HEK293 (cell line): ENCODE measurements at regions of chr5 and their contacts with region 1.

Region 1: GRCh38 chr5:151740336-151740942 is 18.0 kb downstream of the ATOX1 start:
- H3K4me3 ChIP-seq: no peak overlapping the region
- H3K27ac ChIP-seq: no peak overlapping the region
- H3K4me1 ChIP-seq: peaks cover 2% of the 10 kb centered on the region; the same call in 1 of the 2 replicates
- CTCF ChIP-seq: peak; percentile 57; the same call in 1 of the 2 replicates

Region 2: DNA sequence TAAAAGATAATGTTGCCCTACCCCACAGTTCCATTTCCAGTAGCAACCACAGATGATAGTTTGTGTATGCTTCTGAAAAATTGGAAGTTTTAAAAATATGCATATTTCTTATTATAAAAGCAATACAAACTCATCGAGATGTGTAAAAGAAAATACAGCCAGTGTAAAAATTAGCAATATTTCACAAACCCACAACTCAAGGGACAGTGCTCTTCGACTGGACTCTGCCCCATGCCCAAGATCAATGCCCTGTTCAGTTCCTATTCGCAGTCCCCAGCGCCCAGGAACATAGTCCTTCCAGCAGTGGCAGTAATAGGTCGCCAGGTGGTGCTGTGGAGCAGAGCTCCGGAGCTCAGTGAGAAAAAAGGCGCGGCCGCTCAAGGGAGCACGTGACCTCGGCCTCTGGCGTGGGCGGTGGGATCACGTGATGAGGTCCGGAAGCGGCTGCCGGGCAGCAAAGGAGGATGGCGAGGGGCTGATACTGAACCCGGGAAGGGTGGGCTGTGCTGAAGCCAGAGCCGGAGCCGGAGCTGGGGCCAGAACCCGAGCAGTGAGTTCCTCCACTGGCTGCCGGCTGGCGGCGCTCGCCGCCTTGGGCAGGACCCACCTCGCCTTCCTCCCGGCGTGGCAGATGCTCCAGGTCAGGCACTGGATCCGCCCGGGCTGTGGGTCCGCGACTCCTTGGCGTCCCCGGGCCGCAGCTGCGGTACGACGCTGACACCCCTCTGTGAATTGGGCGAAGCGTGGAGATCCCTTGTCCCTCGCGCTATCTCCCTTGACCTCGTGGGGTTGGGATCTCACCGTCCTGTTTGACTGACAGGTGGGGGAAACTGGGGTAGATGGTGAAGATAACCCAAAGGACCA is 293.0 kb before region 1 on chr5 and contains the start of gene SLC36A1:
- CTCF ChIA-PET with region 1: interaction called, 12 read pairs
- POLR2A ChIA-PET with region 1: no interaction called
- H3K4me3 ChIP-seq: peak within 1 kb of the TSS; percentile 63
- H3K27ac ChIP-seq: no peak within 1 kb of the TSS
- H3K4me1 ChIP-seq: peaks cover 5% of the 10 kb centered on the region
- CTCF ChIP-seq: peak; percentile 91

Region 3: DNA sequence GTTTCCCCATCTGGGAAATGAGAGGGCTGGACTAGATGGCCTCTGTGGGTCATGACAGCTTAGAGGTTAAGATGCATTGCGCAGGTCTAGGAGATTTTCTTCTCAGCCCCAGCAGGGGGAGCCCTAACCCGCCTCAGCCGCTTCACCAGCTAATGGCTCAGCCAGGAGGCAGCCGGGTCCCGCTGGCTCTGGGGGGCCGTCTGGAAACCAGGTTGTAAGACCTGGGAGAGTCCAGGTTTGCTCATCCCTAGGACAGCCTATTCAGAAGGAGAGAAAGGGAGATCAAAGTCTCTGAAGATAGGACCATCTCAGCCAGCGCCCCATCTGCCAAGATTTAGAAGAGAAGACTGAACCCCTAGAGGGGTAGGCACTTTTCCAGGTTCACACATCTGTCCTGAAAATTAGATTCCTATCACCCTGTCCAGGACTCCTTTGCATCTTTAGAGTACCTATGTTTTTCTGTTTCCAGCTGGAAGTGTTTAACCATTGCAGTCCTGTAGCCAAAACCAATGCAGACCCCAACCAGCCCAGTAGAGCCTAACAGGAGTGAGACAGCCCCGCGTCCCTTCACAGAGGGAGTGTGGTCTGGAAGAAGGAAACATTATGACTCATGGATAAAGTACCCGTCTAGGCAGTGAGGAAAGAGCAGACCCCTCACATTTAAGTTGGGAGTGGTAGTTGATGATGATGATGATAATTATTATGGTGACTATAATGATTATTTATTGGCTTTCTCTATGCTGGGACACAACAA is 81.3 kb before region 1 on chr5:
- CTCF ChIA-PET with region 1: interaction called, 180 read pairs
- POLR2A ChIA-PET with region 1: interaction called, 3 read pairs
- H3K4me3 ChIP-seq: no peak overlapping the region
- H3K27ac ChIP-seq: no peak overlapping the region
- H3K4me1 ChIP-seq: no peaks in the 10 kb centered on the region
- CTCF ChIP-seq: peak; percentile 76

Region 4: DNA sequence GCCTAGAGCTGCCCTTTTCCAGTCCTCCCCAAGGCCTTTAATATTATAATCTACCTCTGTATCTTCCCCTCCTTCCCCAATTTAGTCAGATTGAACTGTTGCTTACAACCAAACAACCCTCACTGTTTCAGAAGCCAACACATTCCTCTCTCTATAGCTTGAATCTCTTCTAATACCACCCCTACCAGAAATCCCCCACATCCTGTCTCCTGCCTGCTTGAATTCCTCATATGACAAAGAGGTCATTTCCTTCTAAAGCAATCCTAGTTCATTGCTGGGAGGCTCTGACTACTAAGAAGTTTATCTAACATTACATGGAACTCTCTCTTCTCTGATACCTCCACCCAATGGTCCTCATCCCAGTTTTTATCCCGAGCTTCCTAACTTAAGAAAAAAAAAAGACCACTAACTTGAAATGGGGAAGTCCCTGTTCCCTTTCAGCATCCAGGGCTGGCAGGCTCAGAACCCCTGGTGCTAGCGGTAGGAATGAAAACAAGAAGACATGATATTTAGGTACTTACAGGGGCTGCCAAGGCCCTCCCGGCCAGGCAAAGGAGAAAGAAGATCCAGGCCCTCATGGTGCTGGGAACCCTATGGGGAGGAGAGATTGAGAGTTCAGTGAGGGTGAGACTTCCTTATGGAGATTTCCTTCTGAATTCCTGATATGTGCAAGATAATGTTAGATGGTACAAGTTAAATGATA is 64.7 kb before region 1 on chr5:
- CTCF ChIA-PET with region 1: interaction called, 11 read pairs
- POLR2A ChIA-PET with region 1: no interaction called
- H3K4me3 ChIP-seq: no peak overlapping the region
- H3K27ac ChIP-seq: no peak overlapping the region
- H3K4me1 ChIP-seq: peaks cover 2% of the 10 kb centered on the region; the same call in 1 of the 2 replicates
- CTCF ChIP-seq: no peak

Region 5: DNA sequence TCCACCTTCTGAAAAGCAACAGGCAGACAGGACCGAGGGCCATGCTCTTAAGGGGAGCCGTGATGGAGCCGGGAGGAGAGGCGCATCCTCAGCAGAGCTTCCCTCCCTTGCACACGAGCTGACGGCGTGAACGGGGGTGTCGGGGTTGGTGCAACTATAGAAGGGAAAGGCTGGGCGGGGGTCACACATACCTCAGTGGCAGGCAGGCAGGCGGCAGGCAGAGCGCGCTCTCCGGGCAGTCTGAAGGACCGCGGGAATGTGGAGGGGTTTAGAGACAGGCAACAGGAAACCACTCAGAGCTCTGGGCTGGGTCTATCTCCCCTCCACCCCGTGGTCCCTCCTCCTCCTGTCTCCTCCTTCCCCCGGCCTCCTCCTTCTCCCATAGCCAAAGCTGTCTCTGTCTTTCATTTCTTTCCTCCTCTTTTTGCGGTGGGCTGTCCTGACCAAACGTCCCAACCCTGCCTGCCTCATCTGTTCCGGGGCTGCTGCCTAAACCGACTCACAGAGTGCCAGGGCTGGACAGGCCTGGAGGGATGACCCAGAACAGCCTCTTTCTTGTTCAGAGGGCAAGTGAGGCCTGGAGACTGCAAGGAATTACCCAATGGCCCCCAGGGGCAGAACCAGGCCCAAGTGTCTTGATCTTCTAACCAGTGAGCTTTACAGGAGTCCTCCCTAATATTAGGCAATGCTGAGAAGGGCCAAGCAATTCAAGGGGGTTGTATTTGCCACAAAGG is 53.6 kb before region 1 on chr5 and contains the start of gene SPARC:
- CTCF ChIA-PET with region 1: interaction called, 10 read pairs
- POLR2A ChIA-PET with region 1: interaction called, 8 read pairs
- H3K4me3 ChIP-seq: peak within 1 kb of the TSS; percentile 67
- H3K27ac ChIP-seq: no peak within 1 kb of the TSS; the same call in 1 of the 2 replicates
- H3K4me1 ChIP-seq: peaks cover 6% of the 10 kb centered on the region; the same call in 1 of the 2 replicates
- CTCF ChIP-seq: no peak

Region 6: GRCh38 chr5:151719228-151720000 is 21.0 kb before region 1 on chr5:
- CTCF ChIA-PET with region 1: interaction called, 73 read pairs
- POLR2A ChIA-PET with region 1: interaction called, 3 read pairs
- H3K4me3 ChIP-seq: no peak overlapping the region
- H3K27ac ChIP-seq: no peak overlapping the region
- H3K4me1 ChIP-seq: no peaks in the 10 kb centered on the region
- CTCF ChIP-seq: peak; percentile 22; the same call in 1 of the 2 replicates

Region 7: GRCh38 chr5:151751091-151751490 is 10.7 kb after region 1 on chr5:
- CTCF ChIA-PET with region 1: interaction called, 12 read pairs
- POLR2A ChIA-PET with region 1: no interaction called
- H3K4me3 ChIP-seq: no peak overlapping the region
- H3K27ac ChIP-seq: no peak overlapping the region
- H3K4me1 ChIP-seq: peaks cover 4% of the 10 kb centered on the region
- CTCF ChIP-seq: no peak

Region 8: DNA sequence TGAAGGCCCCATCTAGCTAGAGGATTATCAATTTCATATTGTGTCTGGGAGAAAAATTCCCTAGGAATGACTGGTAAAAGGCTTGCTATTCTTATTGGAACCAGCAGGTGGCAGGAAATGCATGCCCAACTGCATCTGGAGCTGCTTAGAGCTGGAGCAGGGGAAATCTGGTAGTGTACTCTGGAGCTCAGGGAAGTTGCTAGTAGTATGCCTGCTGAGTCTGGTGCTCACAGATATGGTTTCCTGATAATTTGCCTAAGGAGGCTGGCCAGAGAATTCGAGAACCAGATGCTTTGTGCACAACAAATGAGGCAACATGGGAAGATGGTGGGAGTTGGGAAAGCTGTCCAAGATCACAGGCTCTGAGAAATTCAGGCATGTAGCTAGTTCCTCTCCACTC is 85.0 kb after region 1 on chr5:
- CTCF ChIA-PET with region 1: no interaction called
- POLR2A ChIA-PET with region 1: no interaction called
- H3K4me3 ChIP-seq: no peak overlapping the region
- H3K27ac ChIP-seq: no peak overlapping the region
- H3K4me1 ChIP-seq: no peaks in the 10 kb centered on the region
- CTCF ChIP-seq: peak; percentile 64